ENCODE measurements at regions of chr19 and their contacts with region 1.

Region 1: GRCh38 chr19:56333505-56333904 is 18.9 kb upstream of the ZSCAN5A start:
- DNase-seq: peak; percentile 62
- H3K4me3 Mint-ChIP-seq: no peak overlapping the region
- H3K27ac Mint-ChIP-seq: no peak overlapping the region
- H3K4me1 Mint-ChIP-seq: no peaks in the 10 kb centered on the region
- H3K27me3 Mint-ChIP-seq: peaks cover 11% of the 10 kb centered on the region
- CTCF ChIP-seq: peak; percentile 69

Region 2: GRCh38 chr19:56066152-56067023 is 267.1 kb before region 1 on chr19:
- CTCF ChIA-PET with region 1: interaction called, 40 read pairs
- POLR2A ChIA-PET with region 1: no interaction called
- intact Hi-C with region 1: loop called (anchors 1 kb)
- DNase-seq: peak; percentile 59
- H3K4me3 Mint-ChIP-seq: no peak overlapping the region
- H3K27ac Mint-ChIP-seq: no peak overlapping the region
- H3K4me1 Mint-ChIP-seq: peaks cover 8% of the 10 kb centered on the region
- H3K27me3 Mint-ChIP-seq: no peaks in the 10 kb centered on the region
- CTCF ChIP-seq: peak; percentile 94

Region 3: DNA sequence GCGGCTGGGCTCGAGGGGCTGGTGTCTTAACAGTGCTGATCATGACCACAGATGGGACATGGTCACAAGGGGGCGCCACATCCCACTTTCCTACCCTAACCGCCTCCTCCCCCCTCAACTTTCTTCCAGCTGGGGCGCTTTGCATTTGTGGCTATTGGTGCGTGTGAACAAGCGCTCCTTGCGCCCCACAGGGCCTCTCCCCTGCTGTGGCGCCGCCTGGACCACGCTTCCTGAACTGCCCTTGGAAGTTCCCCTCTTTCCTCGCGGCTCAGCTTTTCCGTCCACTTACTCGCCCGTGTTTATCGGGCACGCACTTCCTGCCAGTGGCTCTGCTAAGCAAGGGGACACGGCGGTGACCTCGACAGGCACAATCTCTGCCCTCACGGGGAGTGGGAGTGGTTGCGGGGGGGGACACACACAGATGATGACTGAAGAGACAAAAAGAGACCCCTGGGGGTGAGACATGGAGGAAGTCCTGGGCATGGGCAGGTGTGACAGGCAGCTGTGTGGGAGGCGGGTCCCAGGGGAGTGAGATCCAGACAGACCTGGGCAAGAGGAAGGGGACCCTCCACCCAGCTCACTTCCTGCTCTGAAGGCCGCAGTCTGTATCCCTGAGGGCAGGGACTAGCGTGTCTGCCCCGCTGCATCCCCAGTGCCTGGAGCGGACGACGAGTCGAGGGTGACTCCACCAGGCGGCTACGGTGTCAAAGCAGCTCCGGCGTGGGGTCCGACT is 252.7 kb before region 1 on chr19:
- CTCF ChIA-PET with region 1: interaction called, 121 read pairs
- POLR2A ChIA-PET with region 1: interaction called, 4 read pairs
- intact Hi-C with region 1: loop called (anchors 1 kb)
- DNase-seq: peak; percentile 73
- H3K4me3 Mint-ChIP-seq: peak overlapping the region; percentile 55
- H3K27ac Mint-ChIP-seq: peak overlapping the region; percentile 67
- H3K4me1 Mint-ChIP-seq: peaks cover 9% of the 10 kb centered on the region
- H3K27me3 Mint-ChIP-seq: no peaks in the 10 kb centered on the region
- CTCF ChIP-seq: peak; percentile 41

Region 4: GRCh38 chr19:56170261-56170660 is 163.2 kb before region 1 on chr19:
- CTCF ChIA-PET with region 1: interaction called, 4 read pairs
- POLR2A ChIA-PET with region 1: no interaction called
- intact Hi-C with region 1: loop called (anchors 1 kb)
- DNase-seq: peak; percentile 93
- H3K4me3 Mint-ChIP-seq: peak overlapping the region; percentile 0
- H3K27ac Mint-ChIP-seq: no peak overlapping the region
- H3K4me1 Mint-ChIP-seq: peaks cover 7% of the 10 kb centered on the region
- H3K27me3 Mint-ChIP-seq: no peaks in the 10 kb centered on the region
- CTCF ChIP-seq: no peak

Region 5: DNA sequence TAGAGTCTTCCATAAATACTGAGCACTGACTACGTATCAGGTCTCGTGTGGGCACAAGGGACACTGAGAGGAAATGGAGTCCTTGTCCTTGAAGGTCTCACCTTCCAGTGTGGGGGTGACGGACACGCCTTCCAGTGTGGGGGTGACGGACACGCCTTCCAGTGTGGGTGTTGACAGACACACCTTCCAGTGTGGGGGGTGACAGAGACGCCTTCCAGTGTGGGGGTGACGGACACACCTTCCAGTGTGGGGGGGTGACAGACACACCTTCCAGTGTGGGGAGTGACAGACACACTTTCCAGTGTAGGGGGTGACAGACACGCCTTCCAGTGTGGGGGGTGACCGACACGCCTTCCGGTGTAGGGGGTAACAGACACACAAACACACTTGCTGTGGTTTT is 75.2 kb before region 1 on chr19:
- CTCF ChIA-PET with region 1: interaction called, 168 read pairs
- POLR2A ChIA-PET with region 1: interaction called, 8 read pairs
- intact Hi-C with region 1: loop called (anchors 1 kb)
- DNase-seq: no peak
- H3K4me3 Mint-ChIP-seq: no peak overlapping the region
- H3K27ac Mint-ChIP-seq: no peak overlapping the region
- H3K4me1 Mint-ChIP-seq: no peaks in the 10 kb centered on the region
- H3K27me3 Mint-ChIP-seq: no peaks in the 10 kb centered on the region
- CTCF ChIP-seq: no peak

Region 6: GRCh38 chr19:56314562-56315077 is 18.9 kb before region 1 on chr19 and contains the start of gene ZSCAN5A:
- CTCF ChIA-PET with region 1: interaction called, 25 read pairs
- POLR2A ChIA-PET with region 1: interaction called, 4 read pairs
- intact Hi-C with region 1: no loop called
- DNase-seq: peak; percentile 97
- H3K4me3 Mint-ChIP-seq: peak within 1 kb of the TSS; percentile 81
- H3K27ac Mint-ChIP-seq: peak within 1 kb of the TSS; percentile 100
- H3K4me1 Mint-ChIP-seq: peaks cover 18% of the 10 kb centered on the region
- H3K27me3 Mint-ChIP-seq: no peaks in the 10 kb centered on the region
- CTCF ChIP-seq: no peak
- total RNA-seq, gene ZSCAN5A: 6.2 and 8.1 TPM in 2 replicates

Region 7: GRCh38 chr19:56350416-56351045 is 17.0 kb after region 1 on chr19:
- CTCF ChIA-PET with region 1: interaction called, 35 read pairs
- POLR2A ChIA-PET with region 1: no interaction called
- intact Hi-C with region 1: no loop called
- DNase-seq: peak; percentile 49
- H3K4me3 Mint-ChIP-seq: no peak overlapping the region
- H3K27ac Mint-ChIP-seq: no peak overlapping the region
- H3K4me1 Mint-ChIP-seq: no peaks in the 10 kb centered on the region
- H3K27me3 Mint-ChIP-seq: no peaks in the 10 kb centered on the region
- CTCF ChIP-seq: peak; percentile 79

Measured in MCF 10A (cell line).